GM12878 (cell line): ENCODE measurements at regions of chr9 and their contacts with region 1.

Region 1: GRCh38 chr9:25975667-25976066 is 297.4 kb upstream of the TUSC1 start:
- DNase-seq: no peak
- ATAC-seq: no peak
- H3K4me3 ChIP-seq: no peak overlapping the region
- H3K27ac ChIP-seq: no peak overlapping the region
- H3K4me1 ChIP-seq: no peaks in the 10 kb centered on the region
- H3K27me3 ChIP-seq: no peaks in the 10 kb centered on the region
- CTCF ChIP-seq: no peak
- EP300 ChIP-seq: no peak
- POLR2A ChIP-seq: no peak
- RAD21 ChIP-seq: no peak

Region 2: DNA sequence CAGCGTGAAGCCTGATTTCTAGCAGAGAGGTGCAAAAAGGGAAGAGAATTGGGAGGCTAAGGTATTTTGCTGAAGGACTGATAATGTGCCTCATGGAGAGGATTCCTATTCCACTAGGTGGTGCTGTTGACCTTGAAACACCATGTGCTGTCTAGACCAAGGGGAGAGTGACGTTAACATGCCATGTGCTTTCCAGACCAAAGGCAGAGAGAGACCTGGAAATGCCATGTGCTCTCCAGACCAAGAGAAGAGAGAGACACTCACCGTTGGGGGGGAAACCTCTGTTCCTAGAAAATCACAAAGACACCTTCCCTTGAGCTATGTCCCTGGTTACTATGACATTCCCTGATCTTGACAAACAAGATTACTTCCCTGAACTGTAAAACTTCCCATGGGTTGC is 11.4 kb before region 1 on chr9:
- CTCF ChIA-PET with region 1: no interaction called
- POLR2A ChIA-PET with region 1: no interaction called
- RAD21 ChIA-PET with region 1: no interaction called
- SMC1A ChIA-PET with region 1: no interaction called
- in situ Hi-C with region 1: no loop called
- intact Hi-C with region 1: no loop called
- DNase-seq: no peak
- ATAC-seq: peak; percentile 92
- H3K4me3 ChIP-seq: no peak overlapping the region
- H3K27ac ChIP-seq: no peak overlapping the region
- H3K4me1 ChIP-seq: no peaks in the 10 kb centered on the region
- H3K27me3 ChIP-seq: no peaks in the 10 kb centered on the region
- CTCF ChIP-seq: peak; percentile 36 to 61 (median 54); a peak in 4 of 6 replicates
- EP300 ChIP-seq: no peak
- POLR2A ChIP-seq: no peak
- RAD21 ChIP-seq: peak; percentile 77

Region 3: GRCh38 chr9:26043431-26043830 is 67.8 kb after region 1 on chr9:
- CTCF ChIA-PET with region 1: no interaction called
- POLR2A ChIA-PET with region 1: no interaction called
- RAD21 ChIA-PET with region 1: no interaction called
- SMC1A ChIA-PET with region 1: no interaction called
- in situ Hi-C with region 1: no loop called
- intact Hi-C with region 1: loop called (anchors 2 kb)
- DNase-seq: no peak
- ATAC-seq: no peak
- H3K4me3 ChIP-seq: no peak overlapping the region
- H3K27ac ChIP-seq: no peak overlapping the region
- H3K4me1 ChIP-seq: no peaks in the 10 kb centered on the region
- H3K27me3 ChIP-seq: no peaks in the 10 kb centered on the region
- CTCF ChIP-seq: no peak
- EP300 ChIP-seq: no peak
- POLR2A ChIP-seq: no peak
- RAD21 ChIP-seq: no peak